Astrocyte of the cerebellum (primary cell): ENCODE measurements at regions of chr7 and their contacts with region 1.

Region 1: GRCh38 chr7:122219253-122219865 is 75.3 kb upstream of the AASS start:
- DNase-seq: peak; percentile 2
- H3K4me3 ChIP-seq: no peak overlapping the region
- CTCF ChIP-seq: peak; percentile 50

Region 2: GRCh38 chr7:122532406-122533269 is 313.3 kb after region 1 on chr7:
- in situ Hi-C with region 1: loop called (anchors 5 kb)
- DNase-seq: no peak
- H3K4me3 ChIP-seq: no peak overlapping the region
- CTCF ChIP-seq: peak; percentile 12